ENCODE measurements at regions of chr7 and their contacts with region 1.

Region 1: DNA sequence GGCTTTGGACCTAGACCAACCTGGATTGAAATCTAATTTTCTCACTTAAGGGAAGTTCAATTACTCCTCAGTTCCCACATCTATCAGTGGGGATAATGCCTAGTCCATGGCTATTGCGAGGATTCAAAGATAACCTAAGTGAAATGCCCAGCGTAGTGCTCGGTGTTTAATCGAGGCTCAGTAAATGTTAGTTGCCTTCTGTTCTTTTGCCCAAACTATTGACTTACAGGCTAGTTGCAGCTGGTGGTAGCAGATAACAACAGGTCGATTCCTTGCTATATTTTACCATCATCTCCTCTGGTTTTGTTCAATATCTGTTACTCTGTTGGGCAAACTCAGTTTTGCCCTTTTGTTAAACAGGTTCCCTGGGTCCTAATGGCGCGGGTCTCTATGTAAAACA is 22.8 kb downstream of the DNAH11 start:
- DNase-seq: no peak
- ATAC-seq: no peak

Region 2: GRCh38 chr7:20816372-20816959 is 749.1 kb before region 1 on chr7:
- intact Hi-C with region 1: loop called (anchors 2 kb)
- DNase-seq: no peak
- ATAC-seq: no peak